ENCODE measurements at regions of chr15 and their contacts with region 1.

Region 1: DNA sequence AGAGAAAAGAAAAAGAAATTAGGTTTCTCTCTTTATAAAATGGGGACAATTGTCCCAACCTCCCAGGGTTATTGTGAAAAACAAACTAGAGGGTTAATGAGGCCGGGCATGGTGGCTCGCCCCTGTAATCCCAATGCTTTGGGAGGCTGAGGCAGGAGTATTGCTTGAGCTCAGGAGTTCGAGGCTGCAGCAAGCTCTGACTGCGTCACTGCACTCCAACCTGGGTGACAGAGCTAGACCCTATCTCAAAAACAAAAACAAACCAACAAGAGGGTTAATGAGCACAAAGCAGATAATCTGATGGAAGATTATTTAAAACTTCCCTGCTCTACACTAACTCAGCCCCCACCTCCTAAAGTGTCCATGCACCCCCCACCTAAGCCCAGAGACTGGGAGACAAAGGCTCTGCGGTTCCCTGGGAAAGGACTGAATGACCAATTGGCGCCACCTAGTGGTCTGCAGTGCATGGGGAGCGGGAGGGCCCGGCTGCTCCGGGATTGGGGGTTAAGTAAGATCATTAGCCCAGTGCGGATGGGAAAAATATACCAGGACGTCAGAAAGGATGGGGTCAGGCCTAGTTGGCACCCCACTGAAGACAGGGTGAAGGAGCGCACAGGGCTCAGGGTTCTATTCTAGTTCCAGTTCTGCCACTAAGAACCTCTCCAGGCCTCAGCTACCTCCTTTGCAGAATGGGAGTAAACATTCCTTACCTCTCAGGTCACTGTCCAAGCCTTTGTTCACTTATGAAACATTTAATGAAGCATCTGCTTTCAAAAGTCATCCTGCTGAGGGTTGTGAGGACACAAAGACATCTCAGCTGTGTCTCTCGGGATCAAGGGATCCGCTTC is 15.6 kb downstream of the PIF1 start:
- DNase-seq: peak; percentile 86
- CTCF ChIP-seq: peak; percentile 96

Region 2: GRCh38 chr15:64478863-64479262 is 331.0 kb before region 1 on chr15:
- CTCF ChIA-PET with region 1: no interaction called
- POLR2A ChIA-PET with region 1: no interaction called
- DNase-seq: no peak
- CTCF ChIP-seq: no peak

Region 3: DNA sequence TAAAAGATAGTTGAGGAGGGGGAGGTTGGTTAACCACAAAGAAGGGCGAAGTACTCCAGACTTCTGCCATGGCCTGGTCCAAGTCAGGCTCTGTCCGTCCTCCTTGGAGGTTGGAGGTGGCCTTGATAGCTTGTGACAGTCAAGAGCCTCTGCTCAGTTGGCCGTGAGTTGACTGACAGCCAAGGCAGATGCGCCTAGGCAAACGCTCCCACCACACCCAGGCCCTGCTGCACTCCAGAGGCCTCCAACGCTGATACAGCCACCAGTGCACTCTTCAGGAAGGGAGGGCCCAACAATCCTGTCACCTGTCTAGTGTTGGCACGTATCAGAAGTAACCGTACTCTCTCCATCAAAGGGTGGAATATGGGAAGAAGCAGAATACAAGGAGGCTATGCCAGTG is 43.8 kb before region 1 on chr15:
- CTCF ChIA-PET with region 1: interaction called, 12 read pairs
- POLR2A ChIA-PET with region 1: no interaction called
- DNase-seq: no peak
- CTCF ChIP-seq: no peak

Region 4: DNA sequence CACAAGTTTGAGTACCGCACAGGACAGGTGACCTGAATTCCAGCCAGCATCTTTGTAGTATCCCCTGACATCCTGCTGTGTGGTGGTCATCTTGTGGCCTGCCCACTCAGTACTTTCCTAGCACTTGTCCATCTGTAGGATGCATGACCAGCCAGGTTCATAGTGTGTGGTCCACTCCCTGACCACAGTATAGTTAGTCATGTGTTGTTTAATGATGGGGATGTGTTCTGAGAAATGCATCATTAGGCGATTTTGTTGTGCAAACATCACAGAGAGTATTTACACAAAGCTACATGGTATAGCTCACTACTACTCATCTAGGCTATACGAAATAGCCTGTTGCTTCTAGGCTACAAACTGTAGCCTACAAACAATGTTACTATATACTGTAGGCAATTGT is 17.6 kb before region 1 on chr15:
- CTCF ChIA-PET with region 1: interaction called, 14 read pairs
- POLR2A ChIA-PET with region 1: no interaction called
- DNase-seq: no peak
- CTCF ChIP-seq: no peak

Region 5: GRCh38 chr15:64836023-64836536 is 26.2 kb after region 1 on chr15:
- CTCF ChIA-PET with region 1: interaction called, 36 read pairs
- POLR2A ChIA-PET with region 1: no interaction called
- DNase-seq: no peak
- CTCF ChIP-seq: no peak

Region 6: GRCh38 chr15:64915518-64916227 is 105.8 kb after region 1 on chr15:
- CTCF ChIA-PET with region 1: interaction called, 10 read pairs
- POLR2A ChIA-PET with region 1: no interaction called
- DNase-seq: no peak
- CTCF ChIP-seq: no peak